ENCODE measurements at regions of chr10 and their contacts with region 1.

Region 1: DNA sequence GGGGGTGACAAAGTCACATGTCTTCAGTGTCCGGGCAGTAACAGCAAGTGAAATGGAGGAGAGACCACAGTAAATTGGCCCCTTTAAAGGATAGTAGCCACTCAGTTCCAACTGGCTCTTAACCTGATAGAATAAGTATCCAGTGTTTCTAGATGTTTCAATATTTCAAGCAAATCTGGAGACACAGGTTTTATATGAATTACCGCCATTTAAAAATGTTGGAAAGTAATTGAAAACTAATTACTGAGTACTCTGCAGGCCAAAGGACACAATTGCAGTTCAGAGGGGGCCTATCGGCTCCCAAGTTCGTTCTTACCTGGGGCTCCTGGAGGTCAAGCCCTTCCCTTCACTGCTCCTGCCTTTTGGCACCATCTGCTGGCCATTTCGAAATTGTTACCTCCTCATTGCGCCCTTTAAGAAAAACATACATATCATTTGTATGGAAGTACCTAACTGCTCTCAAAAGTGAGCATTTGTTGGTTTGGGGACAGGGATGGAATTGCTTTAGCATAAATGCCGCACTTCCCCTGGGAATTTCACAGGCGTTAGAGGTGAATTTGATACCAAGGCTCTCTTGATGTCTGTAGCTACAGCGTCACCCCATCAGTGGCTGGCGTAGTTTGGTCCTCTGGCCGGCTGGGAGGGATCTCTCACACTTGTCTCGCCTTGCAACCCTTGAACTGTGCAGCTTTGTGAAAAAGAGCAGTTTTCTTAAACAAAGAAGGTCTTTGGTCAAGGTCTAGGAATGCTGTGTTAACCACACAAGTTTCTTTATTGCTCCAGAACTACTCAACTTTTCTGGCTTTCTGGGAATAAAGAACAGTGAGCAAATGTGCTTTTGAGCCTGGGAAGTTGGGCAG is 220.0 kb downstream of the ARHGAP21 start:
- DNase-seq: peak; percentile 41 to 66 (median 58)
- ATAC-seq: peak; percentile 89
- H3K4me3 ChIP-seq: no peak overlapping the region
- H3K27ac ChIP-seq: no peak overlapping the region
- H3K4me1 ChIP-seq: no peaks in the 10 kb centered on the region
- H3K27me3 ChIP-seq: peaks cover 4 to 24% of the 10 kb centered on the region in 2 experiments; a peak in 3 of 5 replicates
- CTCF ChIP-seq: peak; percentile 68 to 72 (median 68)
- EP300 ChIP-seq: no peak
- POLR2A ChIP-seq: no peak
- RAD21 ChIP-seq: peak; percentile 70 to 76

Region 2: GRCh38 chr10:24197263-24197662 is 306.4 kb before region 1 on chr10:
- CTCF ChIA-PET with region 1: no interaction called
- POLR2A ChIA-PET with region 1: no interaction called
- in situ Hi-C with region 1: no loop called
- intact Hi-C with region 1: loop called (anchors 10 kb)
- DNase-seq: no peak
- ATAC-seq: no peak
- H3K4me3 ChIP-seq: no peak overlapping the region
- H3K27ac ChIP-seq: no peak overlapping the region
- H3K4me1 ChIP-seq: no peaks in the 10 kb centered on the region
- H3K27me3 ChIP-seq: no peaks in the 10 kb centered on the region
- CTCF ChIP-seq: no peak
- EP300 ChIP-seq: no peak
- POLR2A ChIP-seq: no peak
- RAD21 ChIP-seq: no peak

Region 3: GRCh38 chr10:24396398-24396797 is 107.3 kb before region 1 on chr10:
- CTCF ChIA-PET with region 1: no interaction called
- POLR2A ChIA-PET with region 1: no interaction called
- in situ Hi-C with region 1: no loop called
- intact Hi-C with region 1: loop called (anchors 10 kb)
- DNase-seq: no peak
- ATAC-seq: peak; percentile 47; the same call in 2 of the 3 replicates
- H3K4me3 ChIP-seq: no peak overlapping the region
- H3K27ac ChIP-seq: no peak overlapping the region
- H3K4me1 ChIP-seq: no peaks in the 10 kb centered on the region
- H3K27me3 ChIP-seq: no peaks in the 10 kb centered on the region
- CTCF ChIP-seq: peak in 2 of 3 experiments; percentile 22 to 23; a peak in 1 of 6 replicates
- EP300 ChIP-seq: no peak
- POLR2A ChIP-seq: no peak
- RAD21 ChIP-seq: no peak